GM10248 (cell line): ENCODE measurements at regions of chr19 and their contacts with region 1.

Region 1: GRCh38 chr19:54390942-54391577 is 24.2 kb upstream of the TTYH1 start:
- DNase-seq: peak; percentile 71
- CTCF ChIP-seq: peak; percentile 78

Region 2: DNA sequence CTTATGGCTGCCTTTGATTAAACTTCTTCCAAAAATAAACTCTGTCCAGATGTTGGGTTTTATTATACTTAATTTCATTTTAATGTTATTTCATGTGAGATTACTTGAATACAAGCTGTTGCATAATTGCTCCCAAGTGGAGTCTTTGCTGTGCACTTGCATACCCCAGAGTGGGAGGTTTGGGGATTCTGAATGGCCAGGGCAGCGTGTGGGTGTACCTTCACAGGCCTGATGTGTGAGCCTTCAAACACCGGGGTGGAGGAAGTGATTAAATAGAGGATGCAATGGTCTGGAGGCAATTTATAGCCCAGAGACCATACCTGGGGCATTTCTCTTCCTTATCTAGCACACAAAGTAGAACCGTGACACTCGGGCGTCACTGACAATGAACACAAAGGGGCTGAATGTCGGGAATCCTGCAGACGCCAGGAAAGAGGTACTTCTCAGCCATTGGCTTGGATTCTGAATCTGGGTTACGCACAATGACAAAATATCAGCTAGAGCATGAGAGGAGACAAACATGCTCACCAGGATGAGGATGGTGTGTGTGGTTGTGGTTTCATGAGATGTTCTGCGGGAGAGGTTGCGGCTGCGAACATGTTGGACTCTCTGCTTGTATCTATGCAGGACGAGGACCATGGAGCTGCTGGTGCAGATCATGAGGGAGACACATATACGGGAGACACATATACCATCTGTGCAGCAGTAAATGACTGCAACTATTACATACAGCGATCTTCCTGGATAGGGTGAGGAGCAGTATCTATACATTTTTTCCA is 71.0 kb before region 1 on chr19:
- CTCF ChIA-PET with region 1: interaction called, 25 read pairs
- POLR2A ChIA-PET with region 1: no interaction called
- DNase-seq: no peak
- CTCF ChIP-seq: no peak

Region 3: DNA sequence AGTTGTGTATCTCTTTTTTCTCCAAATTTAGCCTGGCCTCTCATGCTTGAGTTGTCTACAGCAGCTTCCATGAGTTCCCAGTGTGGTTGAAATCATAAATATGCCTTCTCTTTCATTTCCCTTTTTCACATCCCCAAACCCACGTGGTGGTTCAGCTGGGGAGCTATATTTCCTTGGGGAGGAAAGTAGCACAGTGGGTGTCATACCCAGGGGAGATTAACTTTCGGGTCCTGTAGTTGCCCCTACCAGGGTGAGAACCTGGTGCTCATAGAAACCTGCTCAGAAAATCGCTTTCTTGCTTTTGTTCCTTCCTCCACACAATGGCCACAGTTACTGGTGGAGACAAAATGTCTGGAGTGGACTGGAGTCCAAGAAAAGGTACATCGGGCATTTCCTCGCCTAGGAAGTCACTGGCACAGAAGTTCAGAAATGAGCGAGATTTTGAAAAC is 45.1 kb before region 1 on chr19:
- CTCF ChIA-PET with region 1: interaction called, 11 read pairs
- POLR2A ChIA-PET with region 1: no interaction called
- DNase-seq: peak; percentile 35
- CTCF ChIP-seq: no peak

Region 4: DNA sequence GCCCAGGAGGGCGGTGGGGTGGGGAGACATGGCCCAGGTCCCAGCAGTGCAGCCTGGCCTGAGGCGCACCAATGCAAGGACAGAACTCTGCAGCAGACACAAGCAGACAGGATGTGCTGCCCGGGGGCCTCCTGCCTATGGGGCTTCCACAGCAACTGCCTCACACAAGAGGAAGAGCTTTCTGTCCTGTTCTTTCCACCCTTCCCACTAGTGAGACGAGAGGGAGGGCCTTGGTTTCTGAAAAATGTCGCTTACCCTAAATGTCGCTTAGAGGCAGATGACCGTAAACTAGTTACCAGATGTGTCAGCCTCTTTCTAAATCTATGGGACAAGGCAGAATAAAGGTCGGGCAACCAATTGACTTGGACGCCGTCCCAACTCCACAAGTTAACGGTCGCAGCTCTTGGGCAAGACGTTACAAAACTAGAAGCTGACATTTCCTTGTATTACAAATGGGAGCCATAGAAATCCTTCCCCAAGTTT is 26.2 kb before region 1 on chr19 and contains the start of gene LAIR1:
- CTCF ChIA-PET with region 1: interaction called, 15 read pairs
- POLR2A ChIA-PET with region 1: no interaction called
- DNase-seq: no peak
- CTCF ChIP-seq: no peak

Region 5: DNA sequence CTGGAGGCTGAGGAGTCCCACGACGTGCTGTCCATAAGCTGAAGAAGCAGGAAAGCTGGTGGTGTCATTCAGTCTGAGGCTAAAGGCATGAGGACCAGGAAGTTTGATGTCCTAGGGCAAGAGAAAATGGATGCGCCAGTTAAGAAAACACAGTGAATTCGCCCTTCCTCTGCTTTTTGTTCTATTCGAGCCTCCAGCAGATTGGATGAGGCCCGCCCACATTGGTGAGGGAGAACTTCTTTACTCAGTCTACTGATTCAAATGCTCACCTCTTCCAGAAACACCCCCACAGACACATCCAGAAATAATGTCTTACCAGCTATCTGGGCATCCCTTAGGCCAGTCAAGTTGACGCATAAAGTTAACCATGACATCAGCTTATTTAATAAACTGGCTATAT is 16.7 kb after region 1 on chr19:
- CTCF ChIA-PET with region 1: interaction called, 15 read pairs
- POLR2A ChIA-PET with region 1: no interaction called
- DNase-seq: no peak
- CTCF ChIP-seq: no peak